ENCODE measurements at regions of chr12 and their contacts with region 1.

Region 1: DNA sequence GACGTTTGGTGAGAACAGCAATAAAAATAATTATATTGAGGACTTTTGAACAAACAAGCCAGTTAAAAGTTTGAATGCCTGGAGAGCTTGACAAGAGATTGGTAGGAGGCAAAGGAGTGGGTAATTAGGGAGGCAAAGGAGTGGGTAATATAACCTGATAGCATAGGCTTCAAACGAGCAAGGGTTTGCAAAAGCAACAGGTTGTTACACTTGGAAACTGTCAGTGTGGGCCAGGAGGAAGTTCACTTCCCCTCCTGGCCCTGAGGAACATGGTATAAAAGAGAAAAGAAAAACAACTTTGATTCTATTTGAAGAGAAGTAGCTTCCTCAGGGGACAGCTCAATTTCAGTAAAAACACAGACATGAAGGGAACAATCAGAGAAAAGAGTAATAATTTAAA is 121.7 kb downstream of the CCER1 start:
- H3K4me3 ChIP-seq: no peak overlapping the region
- H3K27ac ChIP-seq: no peak overlapping the region
- H3K4me1 ChIP-seq: no peaks in the 10 kb centered on the region; the same call in 1 of the 2 replicates
- CTCF ChIP-seq: no peak

Region 2: DNA sequence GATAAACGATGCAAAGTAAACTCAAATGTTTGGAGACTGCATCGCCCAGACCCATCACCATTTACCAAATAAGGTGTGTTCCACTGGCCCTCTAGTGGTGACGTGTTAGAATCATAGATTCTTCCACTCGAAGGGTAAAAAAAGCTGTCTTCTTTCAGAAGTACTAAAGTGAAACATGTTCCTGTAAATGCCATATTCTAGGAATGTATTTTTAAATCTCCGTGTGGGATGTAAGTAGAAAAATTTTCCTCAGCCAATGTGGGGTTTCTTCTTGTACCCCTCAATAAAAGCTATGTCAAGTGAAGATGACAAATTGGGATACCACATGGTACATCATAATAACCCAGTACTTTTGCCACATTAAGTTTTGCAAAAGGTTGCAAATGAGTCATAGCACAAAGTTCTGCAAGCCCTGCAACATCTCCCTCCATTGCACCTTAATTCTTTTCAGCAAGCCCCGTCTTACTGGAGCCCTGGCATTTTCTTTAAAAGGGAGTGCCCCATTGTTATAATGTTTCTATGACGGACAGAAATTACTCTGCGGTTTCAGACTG is 21.0 kb after region 1 on chr12:
- CTCF ChIA-PET with region 1: interaction called, 12 read pairs
- POLR2A ChIA-PET with region 1: no interaction called
- H3K4me3 ChIP-seq: no peak overlapping the region
- H3K27ac ChIP-seq: no peak overlapping the region
- H3K4me1 ChIP-seq: no peaks in the 10 kb centered on the region; the same call in 1 of the 2 replicates
- CTCF ChIP-seq: no peak

Measured in HEK293 (cell line).